ENCODE measurements at regions of chr5 and their contacts with region 1.

Region 1: DNA sequence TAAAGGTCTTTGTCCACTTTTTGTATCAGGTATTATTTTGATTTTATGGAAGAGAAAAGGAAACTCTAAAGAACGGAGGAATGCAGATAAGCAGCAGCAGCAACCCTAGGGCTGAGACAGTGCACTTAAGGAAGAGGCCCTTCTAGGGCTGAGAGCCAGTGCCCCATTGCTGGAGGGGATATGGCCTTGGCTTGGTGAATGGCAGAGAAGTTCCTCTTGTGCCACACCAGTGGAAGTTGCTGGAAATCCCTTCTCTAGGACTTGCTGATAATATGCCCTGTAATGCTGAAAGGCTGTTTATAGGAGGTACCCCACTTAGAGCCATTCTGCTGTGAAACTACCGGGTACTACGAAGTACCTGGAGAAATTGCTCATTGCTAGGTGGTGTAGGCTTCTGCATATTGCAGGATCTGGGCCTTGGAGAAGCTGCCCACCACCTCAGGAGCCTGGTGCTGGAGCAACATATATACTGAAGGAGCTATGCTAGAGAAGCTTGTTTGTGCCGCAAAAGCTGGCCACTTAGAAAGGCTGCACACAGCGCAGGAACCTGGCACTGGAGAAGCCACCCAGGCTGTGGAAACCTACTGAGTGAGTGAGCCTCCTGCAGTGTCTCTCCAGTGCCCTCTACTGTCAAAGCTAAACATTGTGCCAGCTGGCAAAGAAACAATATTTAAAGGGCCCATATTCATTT is 9.6 kb upstream of the UBTD2 start:
- DNase-seq: peak; percentile 19 to 56 (median 26)
- ATAC-seq: peak; percentile 94
- H3K4me3 ChIP-seq: no peak overlapping the region
- H3K27ac ChIP-seq: no peak overlapping the region
- H3K4me1 ChIP-seq: no peaks in the 10 kb centered on the region
- H3K27me3 ChIP-seq: peaks cover 3 to 24% of the 10 kb centered on the region in 2 experiments
- CTCF ChIP-seq: peak; percentile 73 to 78 (median 78)
- EP300 ChIP-seq: no peak
- POLR2A ChIP-seq: no peak
- RAD21 ChIP-seq: peak; percentile 71 to 81

Region 2: DNA sequence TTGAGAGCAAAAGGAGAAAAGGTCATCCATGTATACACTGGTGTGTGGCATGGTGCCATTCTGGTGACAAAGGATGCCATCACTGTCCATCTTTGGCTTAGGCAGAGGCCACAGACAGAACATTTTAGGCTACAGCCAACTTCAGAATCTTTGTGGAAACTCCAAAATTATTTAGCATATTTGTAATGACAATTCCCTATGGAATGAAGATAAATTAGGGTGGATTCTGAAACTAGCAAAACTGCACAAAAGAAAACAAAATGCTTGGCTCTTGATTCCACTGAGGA is 379.3 kb before region 1 on chr5:
- CTCF ChIA-PET with region 1: no interaction called
- POLR2A ChIA-PET with region 1: no interaction called
- in situ Hi-C with region 1: no loop called
- intact Hi-C with region 1: loop called (anchors 10 kb)
- DNase-seq: no peak
- ATAC-seq: no peak
- H3K4me3 ChIP-seq: no peak overlapping the region
- H3K27ac ChIP-seq: no peak overlapping the region
- H3K4me1 ChIP-seq: no peaks in the 10 kb centered on the region
- H3K27me3 ChIP-seq: no peaks in the 10 kb centered on the region
- CTCF ChIP-seq: no peak
- EP300 ChIP-seq: no peak
- POLR2A ChIP-seq: no peak
- RAD21 ChIP-seq: no peak

Region 3: GRCh38 chr5:172059661-172060100 is 233.5 kb before region 1 on chr5:
- CTCF ChIA-PET with region 1: no interaction called
- POLR2A ChIA-PET with region 1: no interaction called
- in situ Hi-C with region 1: no loop called
- intact Hi-C with region 1: loop called (anchors 5 kb)
- DNase-seq: peak; percentile 38 to 51 (median 51)
- ATAC-seq: peak; percentile 84
- H3K4me3 ChIP-seq: no peak overlapping the region
- H3K27ac ChIP-seq: no peak overlapping the region
- H3K4me1 ChIP-seq: peaks cover 0 to 7% of the 10 kb centered on the region in 2 experiments; a peak in 3 of 5 replicates
- H3K27me3 ChIP-seq: peaks cover 0 to 7% of the 10 kb centered on the region in 2 experiments; a peak in 1 of 5 replicates
- CTCF ChIP-seq: peak; percentile 70 to 82 (median 78)
- EP300 ChIP-seq: no peak
- POLR2A ChIP-seq: no peak
- RAD21 ChIP-seq: peak; percentile 65 to 82

Region 4: DNA sequence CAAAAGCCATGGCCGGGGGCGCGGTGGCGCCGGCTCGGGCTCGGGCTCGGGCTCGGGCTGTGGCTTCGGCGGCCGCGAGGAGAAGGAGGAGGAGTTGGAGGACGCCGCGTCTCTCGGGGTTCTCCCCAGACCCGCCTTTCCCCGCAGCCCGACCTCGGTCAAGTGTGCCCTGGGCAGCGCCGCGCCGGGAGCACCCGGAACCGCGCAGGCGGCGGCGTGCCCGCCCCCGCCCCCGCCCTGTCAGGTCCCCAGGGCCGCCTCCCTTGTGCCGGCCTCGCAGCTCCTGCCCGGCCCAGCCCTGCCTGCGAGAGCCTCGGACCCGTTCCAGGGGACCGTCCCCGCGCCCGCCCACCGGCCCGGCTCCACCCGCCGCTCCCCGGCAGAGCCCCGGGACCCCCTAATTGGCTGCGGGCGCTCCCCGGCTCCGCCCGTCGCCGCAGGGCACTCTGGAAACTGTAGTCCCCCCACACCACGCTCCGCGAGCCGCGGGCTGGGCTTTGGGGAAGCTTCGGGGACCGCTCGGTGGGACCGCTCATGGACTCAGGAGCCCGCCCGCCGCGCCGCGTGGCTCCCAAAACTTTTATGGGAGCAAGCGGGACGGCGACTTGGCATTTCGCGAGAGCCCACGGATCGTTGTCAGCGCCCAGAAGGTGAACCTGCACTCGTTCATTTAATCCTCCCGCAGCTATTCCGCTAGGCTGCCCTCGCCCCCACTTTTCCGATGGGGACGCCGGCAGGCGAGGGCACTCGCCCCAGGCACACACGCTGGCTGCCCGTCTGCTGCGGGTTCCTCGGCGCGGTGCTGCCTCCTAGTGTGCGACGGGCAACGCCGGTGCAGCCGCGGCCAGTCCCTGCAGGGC is 104.9 kb before region 1 on chr5 and contains the start of gene STK10:
- CTCF ChIA-PET with region 1: no interaction called
- POLR2A ChIA-PET with region 1: no interaction called
- in situ Hi-C with region 1: no loop called
- intact Hi-C with region 1: loop called (anchors 2 kb)
- DNase-seq: peak; percentile 85 to 91 (median 88)
- ATAC-seq: peak; percentile 90
- H3K4me3 ChIP-seq: peak within 1 kb of the TSS; percentile 60
- H3K27ac ChIP-seq: no peak within 1 kb of the TSS; the same call in 2 of the 3 replicates
- H3K4me1 ChIP-seq: peaks cover 7 to 19% of the 10 kb centered on the region in 2 experiments; a peak in 3 of 5 replicates
- H3K27me3 ChIP-seq: no peaks in the 10 kb centered on the region
- CTCF ChIP-seq: peak; percentile 91 to 94 (median 94)
- EP300 ChIP-seq: no peak
- POLR2A ChIP-seq: peak; percentile 52
- RAD21 ChIP-seq: peak; percentile 98 to 99
- polyA plus RNA-seq, gene STK10: 0.30 to 0.55 TPM

Region 5: DNA sequence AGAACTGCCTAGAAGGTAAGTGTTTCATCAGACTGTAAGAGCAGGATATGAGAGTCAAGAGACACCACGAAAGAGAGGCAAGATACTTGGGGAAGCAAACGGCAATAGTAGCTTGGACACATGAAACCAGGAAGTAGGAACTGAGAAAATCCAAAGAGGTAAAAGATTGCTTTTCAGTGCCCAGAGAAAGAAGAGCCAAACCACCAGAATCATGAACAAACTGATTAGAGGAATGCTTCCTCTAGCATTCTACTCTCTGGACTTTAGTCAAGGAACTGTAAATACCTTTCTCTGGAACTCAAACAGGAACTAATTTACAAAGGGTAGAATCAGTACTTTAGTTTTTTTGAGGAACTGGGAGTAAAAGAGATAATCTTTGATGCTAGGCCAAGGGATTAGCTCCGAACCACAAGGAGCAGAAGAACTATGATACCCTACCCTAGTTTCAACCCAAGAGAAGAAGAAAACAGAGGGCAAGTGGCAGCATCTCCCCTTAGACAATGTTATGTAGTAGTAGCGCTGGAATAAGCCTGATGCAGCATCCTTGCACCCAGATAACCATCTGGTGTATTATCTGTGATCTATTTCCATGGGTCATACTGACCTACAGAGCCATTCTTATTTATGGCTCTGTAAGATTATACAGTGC is 57.9 kb before region 1 on chr5:
- CTCF ChIA-PET with region 1: no interaction called
- POLR2A ChIA-PET with region 1: no interaction called
- in situ Hi-C with region 1: no loop called
- intact Hi-C with region 1: no loop called
- DNase-seq: no peak
- ATAC-seq: no peak
- H3K4me3 ChIP-seq: no peak overlapping the region
- H3K27ac ChIP-seq: no peak overlapping the region
- H3K4me1 ChIP-seq: no peaks in the 10 kb centered on the region
- H3K27me3 ChIP-seq: peaks cover 10% of the 10 kb centered on the region in 2 experiments; a peak in 3 of 5 replicates
- CTCF ChIP-seq: no peak
- EP300 ChIP-seq: no peak
- POLR2A ChIP-seq: no peak
- RAD21 ChIP-seq: no peak

Measured in K562 (cell line).